ENCODE measurements at regions of chrX and their contacts with region 1.

Region 1: DNA sequence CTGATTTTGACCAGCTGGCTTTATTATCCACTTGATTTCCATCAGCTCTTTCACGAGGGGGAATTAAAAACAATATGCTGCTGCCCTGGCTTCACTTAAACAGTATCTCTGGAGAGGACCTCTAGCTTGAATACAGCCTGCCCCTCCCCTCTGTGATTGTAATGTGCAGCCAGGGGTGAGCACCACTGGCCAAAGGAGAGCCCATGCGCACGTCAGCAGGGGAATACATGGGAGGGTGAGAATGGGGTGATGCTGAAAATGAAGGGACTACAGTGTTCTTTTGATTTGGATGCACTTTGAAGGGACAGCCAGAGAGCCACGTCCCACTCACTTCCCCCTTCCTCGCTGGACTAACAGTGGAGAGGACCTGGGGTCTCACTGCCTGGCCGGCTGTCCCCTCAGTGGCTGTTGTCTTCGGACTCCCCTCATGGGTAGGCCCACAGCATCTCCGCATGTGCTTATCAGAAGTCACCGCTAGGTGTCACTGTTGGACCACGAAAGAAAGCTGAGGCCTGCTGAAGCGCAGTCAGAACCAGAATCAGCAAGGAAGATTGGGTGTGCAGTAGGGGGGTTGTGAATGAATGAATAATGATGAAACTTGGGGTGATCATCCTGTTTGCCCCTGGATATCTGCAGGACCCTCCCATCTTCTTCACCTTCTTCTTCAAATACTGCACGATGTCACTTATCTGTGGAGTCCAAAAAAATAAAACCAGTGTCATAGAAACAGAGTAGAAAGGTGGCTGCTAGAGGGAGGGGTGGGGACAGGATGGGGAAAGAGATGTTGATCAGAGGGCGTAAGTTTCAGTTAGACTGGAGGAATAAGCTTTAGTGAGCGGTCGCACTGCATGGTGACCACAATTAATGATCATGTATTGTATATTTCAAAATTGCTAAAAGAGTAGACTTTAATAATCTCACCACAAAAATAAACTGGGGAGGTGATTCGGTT is 32.8 kb downstream of the CLCN4 start:
- DNase-seq: peak; percentile 67
- H3K4me3 ChIP-seq: no peak overlapping the region
- H3K27ac ChIP-seq: peak overlapping the region; percentile 49
- H3K4me1 ChIP-seq: peaks cover 4% of the 10 kb centered on the region
- H3K27me3 ChIP-seq: no peaks in the 10 kb centered on the region
- CTCF ChIP-seq: peak; percentile 48 to 53
- POLR2A ChIP-seq: no peak

Region 2: DNA sequence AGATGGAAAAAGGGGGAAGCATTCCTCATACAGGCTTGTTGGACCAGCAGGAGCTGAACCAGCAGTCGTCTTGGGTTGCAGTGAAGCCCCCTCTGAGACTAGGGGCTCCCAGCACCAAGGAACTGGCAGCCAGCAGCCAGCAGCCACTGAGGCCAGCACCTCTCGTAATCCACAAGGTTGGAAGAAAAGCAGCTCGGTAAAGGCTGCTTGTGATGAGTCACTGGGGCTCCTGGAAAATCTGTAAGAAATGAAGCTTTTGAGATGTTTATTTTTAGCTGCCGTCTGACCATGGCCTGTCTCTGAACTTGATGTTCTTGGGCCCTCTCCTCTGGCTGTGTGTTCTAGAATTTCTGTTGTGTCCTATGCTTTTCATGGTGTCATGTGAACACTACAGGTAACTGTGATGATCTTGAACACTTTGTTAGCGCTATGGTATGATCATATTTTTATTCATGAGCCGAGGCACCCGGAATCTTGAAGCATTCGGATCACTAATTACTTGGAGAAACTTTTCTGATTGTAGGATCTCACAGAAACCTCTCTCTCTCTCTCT is 14.2 kb before region 1 on chrX:
- CTCF ChIA-PET with region 1: interaction called, 29 read pairs
- POLR2A ChIA-PET with region 1: no interaction called
- dilution Hi-C with region 1: no loop called
- intact Hi-C with region 1: no loop called
- DNase-seq: peak; percentile 23
- H3K4me3 ChIP-seq: no peak overlapping the region
- H3K27ac ChIP-seq: peak overlapping the region; percentile 31
- H3K4me1 ChIP-seq: peaks cover 29% of the 10 kb centered on the region
- H3K27me3 ChIP-seq: no peaks in the 10 kb centered on the region
- CTCF ChIP-seq: no peak
- POLR2A ChIP-seq: no peak

Region 3: GRCh38 chrX:10326578-10326977 is 137.0 kb after region 1 on chrX:
- CTCF ChIA-PET with region 1: no interaction called
- POLR2A ChIA-PET with region 1: no interaction called
- dilution Hi-C with region 1: no loop called
- intact Hi-C with region 1: loop called (anchors 5 kb)
- DNase-seq: peak; percentile 1
- H3K4me3 ChIP-seq: no peak overlapping the region
- H3K27ac ChIP-seq: no peak overlapping the region
- H3K4me1 ChIP-seq: no peaks in the 10 kb centered on the region
- H3K27me3 ChIP-seq: no peaks in the 10 kb centered on the region
- CTCF ChIP-seq: no peak
- POLR2A ChIP-seq: no peak

Region 4: DNA sequence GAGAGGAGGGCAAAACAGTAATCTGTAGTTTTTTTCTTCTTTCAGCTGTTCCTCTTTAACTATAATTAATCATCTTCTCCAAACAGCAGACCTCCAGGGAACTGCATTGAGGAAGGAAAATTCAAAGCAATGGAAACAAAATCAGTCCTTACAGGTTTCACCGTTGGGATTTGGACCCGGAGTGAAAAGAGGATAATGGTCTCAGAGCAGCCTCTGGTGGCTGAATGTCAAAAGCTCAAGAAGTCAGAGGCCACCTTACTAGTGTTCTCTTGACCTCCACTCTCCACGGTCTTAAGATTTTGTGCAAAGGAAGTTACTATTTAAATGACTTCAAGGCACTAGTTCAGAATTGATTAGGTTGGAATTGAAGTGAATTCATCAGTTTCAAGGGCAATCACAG is 446.7 kb after region 1 on chrX:
- CTCF ChIA-PET with region 1: interaction called, 86 read pairs
- POLR2A ChIA-PET with region 1: no interaction called
- dilution Hi-C with region 1: no loop called
- intact Hi-C with region 1: loop called (anchors 1 kb)
- DNase-seq: peak; percentile 73
- H3K4me3 ChIP-seq: no peak overlapping the region
- H3K27ac ChIP-seq: no peak overlapping the region
- H3K4me1 ChIP-seq: peaks cover 10% of the 10 kb centered on the region
- H3K27me3 ChIP-seq: no peaks in the 10 kb centered on the region
- CTCF ChIP-seq: peak; percentile 43 to 65
- POLR2A ChIP-seq: no peak

Region 5: DNA sequence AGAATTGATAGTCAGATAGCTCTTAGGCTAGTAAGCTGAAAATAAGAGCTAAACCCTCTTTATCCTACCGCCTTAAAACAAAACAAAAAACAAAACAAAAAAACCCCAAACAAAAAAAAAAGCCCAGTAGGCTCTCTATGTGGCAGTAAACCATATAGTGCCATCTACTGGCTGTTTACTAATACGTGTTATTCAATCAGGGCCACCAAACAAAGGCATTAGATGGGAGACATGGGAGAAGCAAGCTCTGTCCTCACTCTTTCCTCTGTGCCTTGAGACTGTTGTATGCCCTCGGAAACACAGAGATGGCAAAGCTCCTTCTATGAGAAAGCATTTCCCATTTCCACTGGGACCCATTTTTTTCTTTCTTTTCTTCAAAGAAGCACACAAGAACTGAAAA is 579.6 kb after region 1 on chrX:
- CTCF ChIA-PET with region 1: interaction called, 11 read pairs
- POLR2A ChIA-PET with region 1: no interaction called
- dilution Hi-C with region 1: no loop called
- intact Hi-C with region 1: loop called (anchors 1 kb)
- DNase-seq: peak; percentile 36
- H3K4me3 ChIP-seq: no peak overlapping the region
- H3K27ac ChIP-seq: no peak overlapping the region
- H3K4me1 ChIP-seq: peaks cover 4% of the 10 kb centered on the region
- H3K27me3 ChIP-seq: no peaks in the 10 kb centered on the region
- CTCF ChIP-seq: peak; percentile 24 to 48
- POLR2A ChIP-seq: no peak

Region 6: DNA sequence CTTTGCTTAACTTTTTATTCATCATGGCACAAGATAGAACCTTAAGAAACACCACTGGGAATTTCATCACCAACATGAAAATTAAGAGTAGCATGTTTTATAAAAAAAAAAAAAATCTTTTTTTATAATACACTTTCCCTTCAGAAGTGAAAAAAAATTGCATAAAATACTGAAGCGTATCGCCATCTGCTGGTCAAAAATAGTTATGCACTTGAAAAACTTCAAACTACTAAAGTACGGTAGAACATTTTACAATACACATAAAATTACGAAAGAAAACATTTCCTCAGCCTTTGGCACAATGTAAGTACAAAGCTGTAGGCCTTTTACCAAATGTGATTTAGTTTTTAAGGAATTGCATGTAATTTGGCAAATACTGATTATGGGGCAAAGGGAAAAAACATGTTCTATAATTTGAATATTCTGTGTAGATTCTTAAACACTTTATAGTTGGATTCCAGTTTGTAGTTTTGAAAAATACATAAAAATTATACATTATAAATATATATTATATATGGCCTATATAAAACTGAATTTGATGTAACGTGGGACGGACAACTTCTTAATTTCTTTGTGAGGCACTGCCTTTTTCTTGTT is 948.0 kb after region 1 on chrX:
- CTCF ChIA-PET with region 1: interaction called, 13 read pairs
- POLR2A ChIA-PET with region 1: no interaction called
- dilution Hi-C with region 1: no loop called
- intact Hi-C with region 1: loop called (anchors 1 kb)
- DNase-seq: peak; percentile 45
- H3K4me3 ChIP-seq: no peak overlapping the region
- H3K27ac ChIP-seq: no peak overlapping the region
- H3K4me1 ChIP-seq: no peaks in the 10 kb centered on the region
- H3K27me3 ChIP-seq: no peaks in the 10 kb centered on the region
- CTCF ChIP-seq: peak in 1 of 2 donors; percentile 16
- POLR2A ChIP-seq: no peak